ENCODE measurements at regions of chr1 and their contacts with region 1.

Region 1: GRCh38 chr1:201895913-201896807 is 7.5 kb downstream of the SHISA4 start:
- DNase-seq: peak; percentile 95
- H3K4me3 Mint-ChIP-seq: no peak overlapping the region
- H3K27ac Mint-ChIP-seq: no peak overlapping the region
- H3K4me1 Mint-ChIP-seq: peaks cover 5% of the 10 kb centered on the region
- H3K27me3 Mint-ChIP-seq: peaks cover 13% of the 10 kb centered on the region
- CTCF ChIP-seq: peak; percentile 99

Region 2: GRCh38 chr1:201697174-201697573 is 199.0 kb before region 1 on chr1:
- CTCF ChIA-PET with region 1: no interaction called
- POLR2A ChIA-PET with region 1: no interaction called
- intact Hi-C with region 1: no loop called
- DNase-seq: no peak
- H3K4me3 Mint-ChIP-seq: no peak overlapping the region
- H3K27ac Mint-ChIP-seq: no peak overlapping the region
- H3K4me1 Mint-ChIP-seq: peaks cover 32% of the 10 kb centered on the region
- H3K27me3 Mint-ChIP-seq: no peaks in the 10 kb centered on the region
- CTCF ChIP-seq: no peak

Region 3: DNA sequence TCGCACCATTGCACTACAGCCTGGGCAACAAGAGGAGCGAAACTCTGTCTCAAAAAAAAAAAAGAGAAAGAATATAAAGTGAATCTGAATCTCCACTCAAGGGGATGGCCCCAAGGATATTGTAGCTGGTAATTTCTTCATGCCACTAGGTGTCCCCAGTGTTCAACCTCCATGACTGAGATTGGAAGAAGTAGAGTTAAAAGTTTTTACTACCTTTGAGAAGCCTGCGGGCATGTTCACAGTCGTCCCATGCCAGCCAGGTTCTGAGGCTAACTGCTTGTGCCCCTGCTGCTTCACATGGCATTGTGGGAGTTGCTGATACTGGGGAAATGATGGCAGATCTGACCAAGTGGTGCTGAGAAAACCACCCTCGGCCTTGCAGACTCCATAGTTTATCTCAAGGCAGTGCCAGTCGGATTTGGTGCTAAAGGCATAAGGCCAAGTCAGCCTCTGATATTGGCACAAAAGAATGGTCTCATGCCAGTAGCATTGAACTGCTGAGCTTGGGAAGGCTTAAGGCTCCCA is 18.2 kb before region 1 on chr1:
- CTCF ChIA-PET with region 1: interaction called, 162 read pairs
- POLR2A ChIA-PET with region 1: interaction called, 32 read pairs
- intact Hi-C with region 1: loop called (anchors 1 kb)
- DNase-seq: peak; percentile 85
- H3K4me3 Mint-ChIP-seq: no peak overlapping the region
- H3K27ac Mint-ChIP-seq: no peak overlapping the region
- H3K4me1 Mint-ChIP-seq: peaks cover 21% of the 10 kb centered on the region
- H3K27me3 Mint-ChIP-seq: no peaks in the 10 kb centered on the region
- CTCF ChIP-seq: peak; percentile 93

Region 4: GRCh38 chr1:201937624-201938213 is 41.6 kb after region 1 on chr1:
- CTCF ChIA-PET with region 1: interaction called, 23 read pairs
- POLR2A ChIA-PET with region 1: interaction called, 4 read pairs
- intact Hi-C with region 1: no loop called
- DNase-seq: peak; percentile 53
- H3K4me3 Mint-ChIP-seq: no peak overlapping the region
- H3K27ac Mint-ChIP-seq: peak overlapping the region; percentile 43
- H3K4me1 Mint-ChIP-seq: peaks cover 12% of the 10 kb centered on the region
- H3K27me3 Mint-ChIP-seq: no peaks in the 10 kb centered on the region
- CTCF ChIP-seq: no peak

Region 5: DNA sequence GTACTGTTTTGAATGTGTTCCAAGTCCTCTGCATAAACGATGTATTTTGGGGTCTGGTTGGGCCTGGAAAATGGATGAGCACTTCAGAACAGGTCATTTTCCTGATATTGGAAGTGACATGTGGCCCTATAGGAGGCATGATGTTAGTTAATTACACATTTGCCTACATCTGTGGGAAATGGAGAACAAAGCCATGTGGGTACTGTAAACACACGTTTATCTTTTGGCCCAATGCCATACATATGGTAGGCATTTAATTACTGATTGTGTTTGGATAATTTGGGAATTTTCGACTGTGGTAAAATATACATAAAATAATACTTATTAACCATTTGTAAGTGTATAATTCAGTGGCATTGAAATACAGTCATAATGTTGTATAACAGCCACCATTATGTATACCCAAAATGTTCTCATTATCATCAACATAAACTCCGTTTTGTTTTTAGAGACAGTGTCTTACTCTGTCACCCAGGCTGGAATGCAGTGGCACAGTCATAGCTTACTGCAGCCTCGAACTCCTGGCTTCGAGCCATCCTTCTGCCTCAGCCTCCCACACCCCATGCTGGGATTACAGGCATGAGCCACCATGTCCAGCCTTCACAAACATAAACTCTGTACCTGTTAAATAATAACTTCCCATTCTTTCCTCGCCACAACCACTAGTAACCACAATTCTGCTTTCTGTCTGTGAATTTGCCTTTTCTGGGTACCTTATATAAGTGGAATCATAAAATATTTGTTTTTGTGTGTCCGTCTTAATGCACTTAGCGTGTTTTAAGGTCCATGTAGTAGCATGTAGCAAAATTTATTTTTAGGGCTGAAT is 74.4 kb after region 1 on chr1:
- CTCF ChIA-PET with region 1: interaction called, 882 read pairs
- POLR2A ChIA-PET with region 1: interaction called, 77 read pairs
- intact Hi-C with region 1: loop called (anchors 1 kb)
- DNase-seq: no peak
- H3K4me3 Mint-ChIP-seq: no peak overlapping the region
- H3K27ac Mint-ChIP-seq: no peak overlapping the region
- H3K4me1 Mint-ChIP-seq: peaks cover 15% of the 10 kb centered on the region
- H3K27me3 Mint-ChIP-seq: peaks cover 8% of the 10 kb centered on the region
- CTCF ChIP-seq: no peak

Region 6: GRCh38 chr1:202009326-202010179 is 113.4 kb after region 1 on chr1:
- CTCF ChIA-PET with region 1: interaction called, 68 read pairs
- POLR2A ChIA-PET with region 1: interaction called, 7 read pairs
- intact Hi-C with region 1: no loop called
- DNase-seq: peak; percentile 95
- H3K4me3 Mint-ChIP-seq: no peak overlapping the region
- H3K27ac Mint-ChIP-seq: no peak overlapping the region
- H3K4me1 Mint-ChIP-seq: peaks cover 26% of the 10 kb centered on the region
- H3K27me3 Mint-ChIP-seq: no peaks in the 10 kb centered on the region
- CTCF ChIP-seq: peak; percentile 97

Region 7: GRCh38 chr1:202122639-202123335 is 226.6 kb after region 1 on chr1 and contains the start of gene GPR37L1:
- CTCF ChIA-PET with region 1: interaction called, 72 read pairs
- POLR2A ChIA-PET with region 1: interaction called, 5 read pairs
- intact Hi-C with region 1: loop called (anchors 1 kb)
- DNase-seq: peak; percentile 30
- H3K4me3 Mint-ChIP-seq: no peak within 1 kb of the TSS
- H3K27ac Mint-ChIP-seq: no peak within 1 kb of the TSS
- H3K4me1 Mint-ChIP-seq: no peaks in the 10 kb centered on the region
- H3K27me3 Mint-ChIP-seq: peaks cover 17% of the 10 kb centered on the region
- CTCF ChIP-seq: peak; percentile 30
- total RNA-seq, gene GPR37L1: not detected in 2 replicates